Thyroid gland (tissue), 4 donors: ENCODE measurements at regions of chr3 and their contacts with region 1.

Region 1: GRCh38 chr3:52455283-52456168 is at the start of gene NISCH:
- DNase-seq: peak; percentile 88 to 92
- H3K4me3 ChIP-seq: peak within 1 kb of the TSS; percentile 60 to 95 (median 61)
- H3K27ac ChIP-seq: peak within 1 kb of the TSS; percentile 91 to 98 (median 94)
- H3K4me1 ChIP-seq: peaks cover 32 to 39% of the 10 kb centered on the region in 2 donors
- H3K27me3 ChIP-seq: no peaks in the 10 kb centered on the region
- CTCF ChIP-seq: no peak
- POLR2A ChIP-seq: peak in 1 of 2 donors; percentile 78
- total RNA-seq, gene NISCH: 71.8 to 88.2 (median 86.2) TPM

Region 2: DNA sequence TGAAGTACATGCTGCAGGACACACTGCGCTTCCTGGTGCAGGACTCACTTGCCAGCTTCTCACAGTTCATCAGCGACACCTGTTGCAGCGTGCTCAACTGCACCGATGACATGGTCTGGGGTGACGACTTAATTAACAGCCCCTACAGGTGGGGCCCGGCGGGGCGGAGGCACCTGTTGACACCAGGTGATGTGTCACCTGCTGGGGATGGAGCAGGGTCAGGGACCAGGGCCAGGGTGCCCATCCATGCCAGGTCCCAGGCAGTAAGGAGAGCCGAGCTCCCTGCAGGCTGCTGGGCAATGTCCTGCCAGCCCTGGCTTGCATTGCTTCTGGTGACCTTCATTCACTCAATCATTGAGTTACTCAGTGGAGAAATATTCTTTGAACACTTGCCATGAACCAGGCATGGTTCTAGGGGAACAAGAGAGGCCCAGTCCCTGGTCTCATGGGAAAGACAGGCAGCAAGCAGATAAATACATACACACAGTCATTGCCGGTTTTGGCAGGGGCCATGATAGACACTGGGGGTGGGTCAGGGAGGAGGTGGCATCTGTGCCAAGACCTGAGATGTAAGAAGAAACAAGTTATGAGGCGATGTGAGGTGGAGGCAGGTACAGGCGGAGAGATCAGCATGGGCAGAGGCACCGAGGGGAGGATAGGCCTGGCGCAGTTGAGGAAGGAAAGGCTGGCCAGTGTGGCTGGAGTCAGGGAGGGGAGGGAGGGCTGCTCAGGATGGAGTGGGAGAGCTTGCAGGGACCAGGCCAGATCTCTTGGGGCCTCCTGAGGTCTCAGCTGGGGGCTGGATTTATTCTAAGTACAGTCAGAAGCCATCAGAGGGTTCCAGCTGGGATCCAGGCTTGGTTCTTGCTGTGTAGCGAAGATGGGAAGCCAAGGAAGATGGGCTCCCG is 108.6 kb before region 1 on chr3:
- intact Hi-C with region 1: no loop called
- DNase-seq: no peak
- H3K4me3 ChIP-seq: no peak overlapping the region
- H3K27ac ChIP-seq: no peak overlapping the region
- H3K4me1 ChIP-seq: peaks cover 0 to 9% of the 10 kb centered on the region in 2 donors
- H3K27me3 ChIP-seq: no peaks in the 10 kb centered on the region
- CTCF ChIP-seq: no peak
- POLR2A ChIP-seq: no peak

Region 3: GRCh38 chr3:52420388-52420787 is 35.1 kb before region 1 on chr3:
- intact Hi-C with region 1: no loop called
- DNase-seq: no peak
- H3K4me3 ChIP-seq: no peak overlapping the region
- H3K27ac ChIP-seq: no peak overlapping the region
- H3K4me1 ChIP-seq: no peaks in the 10 kb centered on the region
- H3K27me3 ChIP-seq: no peaks in the 10 kb centered on the region
- CTCF ChIP-seq: no peak
- POLR2A ChIP-seq: no peak

Region 4: DNA sequence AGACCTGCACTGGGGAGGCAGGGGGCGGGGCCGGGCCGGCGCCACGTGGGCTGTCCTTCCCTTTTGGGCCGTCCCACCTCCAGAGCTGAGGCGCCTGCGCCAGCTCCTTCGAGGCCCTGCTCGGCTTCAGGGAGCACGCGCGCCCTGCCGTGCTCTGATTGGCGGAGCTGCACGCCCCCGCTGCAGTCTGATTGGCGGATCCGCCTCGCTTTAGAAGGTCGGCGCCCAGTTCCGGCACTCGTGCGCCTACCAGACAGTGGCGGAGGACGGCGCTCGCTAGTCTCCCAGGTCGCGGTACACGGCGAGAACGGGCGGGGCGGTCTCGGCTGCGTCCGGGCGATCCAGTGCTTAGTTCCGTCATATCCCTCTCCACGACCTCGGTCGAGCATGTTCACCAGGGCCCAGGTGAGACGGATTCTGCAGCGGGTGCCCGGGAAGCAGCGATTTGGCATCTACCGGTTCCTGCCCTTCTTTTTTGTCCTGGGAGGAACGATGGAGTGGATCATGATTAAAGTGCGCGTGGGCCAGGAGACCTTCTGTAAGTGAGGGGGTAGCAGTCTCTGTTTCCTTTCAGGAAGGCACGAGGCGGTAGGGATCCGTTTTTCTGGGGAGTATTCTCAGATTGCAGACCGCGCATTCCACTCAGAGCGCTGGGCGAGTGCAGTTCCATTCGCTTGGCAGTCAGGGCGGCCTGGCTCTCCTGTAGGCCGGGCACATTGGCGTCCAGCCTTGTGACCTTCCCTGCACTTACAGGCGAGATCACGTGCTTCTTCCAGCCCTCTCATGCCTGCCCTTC is 81.0 kb after region 1 on chr3 and contains the start of gene UQCC5:
- intact Hi-C with region 1: loop called (anchors 5 kb)
- DNase-seq: peak; percentile 99
- H3K4me3 ChIP-seq: peak within 1 kb of the TSS; percentile 49 to 68 (median 51)
- H3K27ac ChIP-seq: peak within 1 kb of the TSS; percentile 92 to 94 (median 93)
- H3K4me1 ChIP-seq: peaks cover 48 to 76% of the 10 kb centered on the region in 2 donors
- H3K27me3 ChIP-seq: no peaks in the 10 kb centered on the region
- CTCF ChIP-seq: no peak
- POLR2A ChIP-seq: peak; percentile 73 to 99
- total RNA-seq, gene UQCC5: 4.8 to 34.3 (median 9.4) TPM

Region 5: DNA sequence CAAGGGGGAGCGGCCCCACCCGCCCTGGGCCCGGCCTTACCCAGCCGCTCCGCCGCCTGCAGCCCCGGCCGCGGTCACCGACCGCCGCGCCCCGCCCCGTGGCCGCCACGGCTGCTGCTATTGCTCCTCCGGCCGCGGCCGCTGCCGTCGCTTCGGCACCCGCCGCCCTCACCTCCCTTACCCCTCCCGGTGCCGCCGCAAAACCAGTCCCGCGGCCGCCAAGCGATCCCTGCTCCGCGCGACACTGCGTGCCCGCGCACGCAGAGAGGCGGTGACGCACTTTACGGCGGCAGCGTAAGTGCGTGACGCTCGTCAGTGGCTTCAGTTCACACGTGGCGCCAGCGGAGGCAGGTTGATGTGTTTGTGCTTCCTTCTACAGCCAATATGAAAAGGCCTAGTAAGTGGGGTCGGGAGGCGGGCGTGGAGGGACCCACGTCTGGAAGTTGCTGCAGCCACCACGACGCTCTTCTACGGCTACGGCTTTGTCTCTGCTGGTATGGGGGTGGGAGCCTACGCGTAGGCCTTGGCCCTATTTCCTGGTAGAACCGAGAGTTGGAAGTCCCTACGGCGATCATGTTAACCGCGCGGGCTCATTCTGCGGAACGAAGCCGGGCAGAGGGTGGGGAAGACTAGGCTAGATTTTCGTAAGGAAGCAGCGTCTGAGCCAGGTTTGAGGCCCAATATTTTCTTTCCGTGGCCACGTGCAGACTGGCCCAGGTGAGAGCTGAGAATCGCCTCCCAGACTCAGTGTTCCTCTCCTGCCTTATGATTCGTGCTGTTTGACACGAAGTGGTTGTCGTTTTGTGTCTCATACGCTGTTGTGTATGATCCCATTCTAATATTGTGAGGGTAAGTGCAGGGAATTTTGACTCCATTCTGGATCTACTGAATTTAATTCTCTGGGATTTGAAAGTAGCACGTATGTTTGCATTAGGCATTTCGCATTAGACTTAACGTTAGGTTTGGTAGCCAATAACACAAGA is 230.5 kb after region 1 on chr3 and contains the starts of genes GNL3 and PBRM1:
- intact Hi-C with region 1: loop called (anchors 10 kb)
- DNase-seq: peak; percentile 94 to 95
- H3K4me3 ChIP-seq: peak within 1 kb of the TSS; percentile 71 to 84 (median 83)
- H3K27ac ChIP-seq: peak within 1 kb of the TSS; percentile 93 to 96 (median 95)
- H3K4me1 ChIP-seq: peaks cover 14 to 47% of the 10 kb centered on the region in 2 donors
- H3K27me3 ChIP-seq: no peaks in the 10 kb centered on the region
- CTCF ChIP-seq: no peak
- POLR2A ChIP-seq: peak; percentile 51 to 81
- total RNA-seq, gene GNL3: 39.2 to 68.4 (median 41.7) TPM
- total RNA-seq, gene PBRM1: 111 to 165 (median 125) TPM